GM10248 (cell line): ENCODE measurements at regions of chr6 and their contacts with region 1.

Region 1: DNA sequence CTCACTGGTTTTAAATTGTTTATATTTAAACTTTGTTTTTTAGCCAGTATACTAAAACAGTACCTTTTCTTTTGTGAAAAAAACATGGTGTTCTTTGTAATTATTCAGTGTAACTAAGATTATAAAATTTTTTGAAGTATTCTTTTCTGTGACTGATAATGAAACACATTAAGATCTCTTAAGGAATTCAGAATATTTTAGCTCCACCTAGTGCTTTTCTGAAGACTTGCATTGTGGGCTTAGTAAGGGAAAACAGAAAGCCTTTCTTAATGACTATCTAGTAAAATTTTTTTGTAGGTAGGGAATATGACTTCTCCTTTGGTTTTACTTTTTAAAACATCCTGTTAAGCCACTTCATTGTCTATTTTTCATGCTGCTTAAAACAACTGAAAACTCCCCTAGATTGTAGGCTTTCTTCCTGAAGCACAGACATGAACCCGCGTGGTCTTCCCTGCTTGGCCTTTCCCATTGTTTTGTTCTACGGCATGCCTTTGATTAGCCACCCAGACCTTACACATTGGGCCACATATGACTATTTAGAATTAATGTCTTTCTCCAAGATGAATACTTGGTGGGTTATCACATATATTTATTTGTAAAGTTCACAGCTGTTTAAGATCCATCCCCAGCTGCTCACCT is 72.1 kb downstream of the AFDN start:
- DNase-seq: peak; percentile 32
- CTCF ChIP-seq: peak; percentile 64

Region 2: DNA sequence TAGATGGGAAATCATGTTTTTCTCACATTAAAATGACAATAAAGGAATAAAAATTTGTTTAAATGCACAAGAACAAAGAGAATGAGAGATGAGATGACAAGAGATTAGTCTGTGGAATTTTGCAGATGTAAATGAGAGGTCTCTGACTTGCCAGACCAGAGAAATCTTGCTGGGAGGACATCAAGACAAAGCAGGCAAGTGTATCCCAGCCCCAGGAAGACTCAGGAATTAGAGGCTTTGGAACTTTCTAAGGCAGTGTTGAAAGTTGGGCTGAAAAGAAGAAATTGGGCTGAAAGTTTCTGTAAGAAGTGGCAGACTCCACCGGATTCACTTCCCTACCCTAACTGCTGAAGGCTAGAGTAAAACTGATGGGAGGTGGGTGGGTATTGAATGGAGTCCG is 17.5 kb before region 1 on chr6:
- CTCF ChIA-PET with region 1: interaction called, 15 read pairs
- POLR2A ChIA-PET with region 1: no interaction called
- DNase-seq: no peak
- CTCF ChIP-seq: no peak

Region 3: GRCh38 chr6:167910016-167910415 is 11.2 kb after region 1 on chr6:
- CTCF ChIA-PET with region 1: interaction called, 16 read pairs
- POLR2A ChIA-PET with region 1: no interaction called
- DNase-seq: no peak
- CTCF ChIP-seq: no peak

Region 4: GRCh38 chr6:167937948-167938911 is 39.4 kb after region 1 on chr6:
- CTCF ChIA-PET with region 1: no interaction called
- POLR2A ChIA-PET with region 1: no interaction called
- DNase-seq: no peak
- CTCF ChIP-seq: no peak